ENCODE measurements at regions of chr14 and their contacts with region 1.

Region 1: GRCh38 chr14:56339855-56340701 is 221.9 kb downstream of the PELI2 start:
- DNase-seq: peak; percentile 40 to 68 (median 52)
- ATAC-seq: peak; percentile 97
- H3K4me3 ChIP-seq: no peak overlapping the region
- H3K27ac ChIP-seq: no peak overlapping the region; the same call in 2 of the 3 replicates
- H3K4me1 ChIP-seq: peaks cover 0 to 17% of the 10 kb centered on the region in 2 experiments; a peak in 3 of 5 replicates
- H3K27me3 ChIP-seq: no peaks in the 10 kb centered on the region
- CTCF ChIP-seq: peak; percentile 67 to 78 (median 76)
- EP300 ChIP-seq: peak; percentile 48; the same call in 1 of the 2 replicates
- POLR2A ChIP-seq: no peak
- RAD21 ChIP-seq: peak; percentile 58 to 84

Region 2: DNA sequence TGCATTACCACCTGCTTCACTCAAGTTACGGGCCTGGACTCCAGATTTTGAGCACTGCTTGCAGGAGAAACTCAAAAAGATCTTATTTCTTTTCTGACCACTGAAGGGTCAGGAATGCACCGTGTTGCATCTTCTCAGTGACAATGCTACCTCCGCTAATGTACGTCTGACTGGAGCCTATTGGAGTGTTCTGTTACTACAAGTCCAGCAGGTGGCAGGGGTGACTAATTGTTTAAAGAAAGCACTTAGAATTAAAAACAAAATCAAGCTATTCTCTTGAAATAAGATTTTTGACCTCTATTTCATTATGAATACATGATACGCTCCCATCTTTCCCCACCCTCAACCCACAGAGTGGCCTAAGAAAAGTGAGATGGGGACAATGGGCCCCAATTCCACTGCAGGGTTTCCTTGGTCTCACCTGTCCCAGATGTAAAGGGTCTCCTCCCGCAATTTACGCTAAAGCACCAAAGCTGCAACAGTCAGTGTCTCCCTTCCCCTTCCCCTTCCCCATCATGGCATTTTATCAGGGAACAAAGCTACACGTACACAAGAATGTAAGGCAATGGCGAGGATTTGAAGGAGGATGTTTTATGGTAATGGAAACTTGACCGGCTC is 901.9 kb before region 1 on chr14:
- CTCF ChIA-PET with region 1: no interaction called
- POLR2A ChIA-PET with region 1: no interaction called
- in situ Hi-C with region 1: no loop called
- intact Hi-C with region 1: loop called (anchors 1 kb)
- DNase-seq: peak; percentile 27 to 55 (median 33)
- ATAC-seq: peak; percentile 90
- H3K4me3 ChIP-seq: no peak overlapping the region
- H3K27ac ChIP-seq: no peak overlapping the region
- H3K4me1 ChIP-seq: peaks cover 0 to 4% of the 10 kb centered on the region in 2 experiments; a peak in 2 of 5 replicates
- H3K27me3 ChIP-seq: peaks cover 0 to 4% of the 10 kb centered on the region in 2 experiments; a peak in 1 of 5 replicates
- CTCF ChIP-seq: peak; percentile 29 to 65 (median 56); a peak in 5 of 6 replicates
- EP300 ChIP-seq: no peak
- POLR2A ChIP-seq: no peak
- RAD21 ChIP-seq: peak; percentile 47 to 68

Region 3: DNA sequence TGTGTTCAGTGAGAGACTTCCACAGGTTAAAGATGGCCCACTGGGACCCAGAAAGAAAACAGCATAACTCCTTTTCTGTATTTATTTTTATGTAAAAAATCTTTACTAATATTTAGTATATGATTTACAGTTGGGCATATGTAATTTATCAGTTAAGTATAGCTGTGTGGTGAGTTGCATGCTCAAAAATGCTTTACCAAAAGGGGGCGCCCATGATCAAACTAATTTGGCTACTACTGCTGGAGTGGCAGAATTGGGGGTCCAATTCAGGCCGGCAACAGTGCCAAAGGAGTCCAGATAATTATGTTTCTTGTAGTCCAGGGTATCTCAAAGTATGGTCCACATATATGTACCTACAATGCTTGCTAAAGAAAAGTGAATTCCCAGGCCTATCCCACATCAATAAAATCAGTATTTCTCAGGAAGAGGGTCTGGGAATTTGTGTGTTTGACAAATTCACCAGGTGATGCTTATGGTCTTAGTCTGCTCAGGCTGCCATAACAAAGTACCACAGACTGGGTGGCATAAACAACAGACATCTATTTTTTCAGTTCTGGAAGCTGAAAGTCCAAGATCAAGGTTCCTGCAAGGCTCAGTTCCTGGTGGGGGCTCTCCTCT is 608.1 kb before region 1 on chr14:
- CTCF ChIA-PET with region 1: no interaction called
- POLR2A ChIA-PET with region 1: no interaction called
- in situ Hi-C with region 1: no loop called
- intact Hi-C with region 1: loop called (anchors 2 kb)
- DNase-seq: peak in 2 of 4 experiments; percentile 9 to 49
- ATAC-seq: peak; percentile 69; the same call in 2 of the 3 replicates
- H3K4me3 ChIP-seq: no peak overlapping the region
- H3K27ac ChIP-seq: no peak overlapping the region
- H3K4me1 ChIP-seq: no peaks in the 10 kb centered on the region
- H3K27me3 ChIP-seq: no peaks in the 10 kb centered on the region
- CTCF ChIP-seq: peak; percentile 46 to 65 (median 50); a peak in 5 of 6 replicates
- EP300 ChIP-seq: no peak
- POLR2A ChIP-seq: no peak
- RAD21 ChIP-seq: peak; percentile 61 to 71

Region 4: GRCh38 chr14:55864890-55865655 is 475.0 kb before region 1 on chr14:
- CTCF ChIA-PET with region 1: no interaction called
- POLR2A ChIA-PET with region 1: no interaction called
- in situ Hi-C with region 1: no loop called
- intact Hi-C with region 1: loop called (anchors 5 kb)
- DNase-seq: peak; percentile 23 to 39 (median 28)
- ATAC-seq: peak; percentile 88
- H3K4me3 ChIP-seq: no peak overlapping the region
- H3K27ac ChIP-seq: no peak overlapping the region
- H3K4me1 ChIP-seq: no peaks in the 10 kb centered on the region; a peak in 1 of 5 replicates
- H3K27me3 ChIP-seq: no peaks in the 10 kb centered on the region
- CTCF ChIP-seq: peak; percentile 46 to 64 (median 47); a peak in 4 of 6 replicates
- EP300 ChIP-seq: no peak
- POLR2A ChIP-seq: no peak
- RAD21 ChIP-seq: peak; percentile 58 to 76

Region 5: DNA sequence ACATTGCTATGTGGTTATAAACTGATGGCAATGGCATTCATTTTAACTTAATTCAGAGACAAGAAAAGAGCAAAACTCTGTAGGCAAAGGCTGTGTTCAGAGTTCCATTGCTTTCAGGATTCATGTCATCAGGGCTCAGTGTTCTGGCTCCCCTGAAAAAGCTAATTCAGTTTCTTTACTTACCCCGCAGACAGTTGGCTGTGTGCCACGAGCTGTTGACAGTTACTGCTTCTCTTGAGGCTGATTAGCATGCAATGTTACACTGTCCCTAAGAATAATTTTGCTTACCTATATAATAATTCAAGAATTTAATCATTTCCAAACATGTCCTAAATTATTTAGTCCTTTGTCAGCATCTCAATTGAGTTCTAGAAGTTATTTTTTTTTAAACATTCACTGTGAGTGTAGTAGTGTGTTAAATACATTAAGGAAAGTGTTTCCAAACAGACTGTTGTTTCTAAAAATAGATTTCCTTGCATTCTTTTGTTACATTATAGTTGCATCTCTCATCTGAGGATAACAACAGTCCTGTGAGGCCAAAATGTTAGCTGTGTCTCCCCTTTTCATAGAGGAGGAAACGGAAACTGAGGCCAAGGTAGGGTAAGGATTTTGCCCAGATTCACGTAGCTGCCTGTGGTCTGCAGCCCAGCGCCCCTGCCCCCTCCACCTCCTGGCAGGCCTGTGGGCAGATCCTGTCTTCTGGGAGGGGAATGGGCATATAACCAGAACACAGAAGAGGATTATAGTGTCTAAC is 123.3 kb before region 1 on chr14:
- CTCF ChIA-PET with region 1: no interaction called
- POLR2A ChIA-PET with region 1: interaction called, 3 read pairs
- in situ Hi-C with region 1: no loop called
- intact Hi-C with region 1: loop called (anchors 10 kb)
- DNase-seq: peak; percentile 24 to 71 (median 44)
- ATAC-seq: peak; percentile 36
- H3K4me3 ChIP-seq: no peak overlapping the region
- H3K27ac ChIP-seq: peak overlapping the region; percentile 50; the same call in 2 of the 3 replicates
- H3K4me1 ChIP-seq: peaks cover 11 to 42% of the 10 kb centered on the region in 2 experiments; a peak in 4 of 5 replicates
- H3K27me3 ChIP-seq: no peaks in the 10 kb centered on the region
- CTCF ChIP-seq: no peak
- EP300 ChIP-seq: no peak
- POLR2A ChIP-seq: peak; percentile 91
- RAD21 ChIP-seq: no peak

Region 6: DNA sequence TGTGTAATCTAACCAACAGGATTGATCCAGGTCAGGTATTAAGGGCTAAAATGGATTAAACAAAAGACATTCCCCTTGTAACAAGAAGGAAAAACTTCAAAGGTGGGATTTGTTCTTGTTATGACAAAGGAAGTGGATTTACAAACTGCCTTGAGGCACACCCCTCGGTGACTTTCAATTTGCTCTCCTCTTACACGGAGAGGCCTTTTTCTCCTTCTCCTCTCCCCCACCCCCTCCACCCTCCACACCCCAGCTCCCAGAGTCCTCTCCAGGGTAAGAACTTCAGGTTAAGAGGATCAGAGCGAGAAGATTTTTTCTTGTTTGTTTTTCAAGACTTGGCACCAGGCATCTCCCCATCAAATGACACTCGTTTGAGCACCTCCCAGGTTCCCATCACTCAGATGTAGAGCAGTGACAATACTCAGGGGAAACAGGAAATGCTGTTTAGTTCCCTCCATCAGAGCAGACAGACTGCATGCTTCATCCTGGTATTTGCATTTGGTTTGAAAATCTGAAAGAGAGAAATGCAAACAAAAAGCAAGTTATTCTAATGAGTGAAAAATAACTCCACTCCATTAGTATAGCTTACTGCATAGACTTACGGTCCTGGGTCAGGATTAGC is 161.9 kb after region 1 on chr14:
- CTCF ChIA-PET with region 1: no interaction called
- POLR2A ChIA-PET with region 1: no interaction called
- in situ Hi-C with region 1: no loop called
- intact Hi-C with region 1: no loop called
- DNase-seq: no peak
- ATAC-seq: no peak
- H3K4me3 ChIP-seq: no peak overlapping the region
- H3K27ac ChIP-seq: no peak overlapping the region
- H3K4me1 ChIP-seq: no peaks in the 10 kb centered on the region
- H3K27me3 ChIP-seq: peaks cover 0 to 3% of the 10 kb centered on the region in 2 experiments; a peak in 1 of 5 replicates
- CTCF ChIP-seq: no peak
- EP300 ChIP-seq: no peak
- POLR2A ChIP-seq: no peak
- RAD21 ChIP-seq: no peak

Measured in K562 (cell line).